Naive thymus-derived CD8-positive, alpha-beta T cell (primary cell): ENCODE measurements at regions of chr21 and their contacts with region 1.

Region 1: GRCh38 chr21:36966066-36966820 is at the start of gene HLCS:
- DNase-seq: peak; percentile 63 to 83 (median 75)
- ATAC-seq: peak; percentile 92 to 95
- H3K4me3 Mint-ChIP-seq: peak within 1 kb of the TSS; percentile 75 to 90 (median 86)
- H3K27ac Mint-ChIP-seq: peak within 1 kb of the TSS; percentile 79 to 94 (median 92)
- H3K4me1 Mint-ChIP-seq: peaks cover 7 to 19% (median 14%) of the 10 kb centered on the region in 4 donors
- H3K27me3 Mint-ChIP-seq: no peaks in the 10 kb centered on the region
- polyA plus RNA-seq, gene HLCS: 6.2 to 12.5 (median 8.6) TPM

Region 2: GRCh38 chr21:36989699-36990507 is 23.7 kb after region 1 on chr21:
- POLR2A ChIA-PET with region 1: interaction called, 24 read pairs
- DNase-seq: peak; percentile 62 to 94 (median 79)
- ATAC-seq: peak; percentile 78 to 86
- H3K4me3 Mint-ChIP-seq: peak overlapping the region; percentile 80 to 92 (median 88)
- H3K27ac Mint-ChIP-seq: peak overlapping the region; percentile 80 to 96 (median 88)
- H3K4me1 Mint-ChIP-seq: peaks cover 12 to 30% (median 21%) of the 10 kb centered on the region in 4 donors
- H3K27me3 Mint-ChIP-seq: no peaks in the 10 kb centered on the region